ENCODE measurements at regions of chr6 and their contacts with region 1.

Region 1: DNA sequence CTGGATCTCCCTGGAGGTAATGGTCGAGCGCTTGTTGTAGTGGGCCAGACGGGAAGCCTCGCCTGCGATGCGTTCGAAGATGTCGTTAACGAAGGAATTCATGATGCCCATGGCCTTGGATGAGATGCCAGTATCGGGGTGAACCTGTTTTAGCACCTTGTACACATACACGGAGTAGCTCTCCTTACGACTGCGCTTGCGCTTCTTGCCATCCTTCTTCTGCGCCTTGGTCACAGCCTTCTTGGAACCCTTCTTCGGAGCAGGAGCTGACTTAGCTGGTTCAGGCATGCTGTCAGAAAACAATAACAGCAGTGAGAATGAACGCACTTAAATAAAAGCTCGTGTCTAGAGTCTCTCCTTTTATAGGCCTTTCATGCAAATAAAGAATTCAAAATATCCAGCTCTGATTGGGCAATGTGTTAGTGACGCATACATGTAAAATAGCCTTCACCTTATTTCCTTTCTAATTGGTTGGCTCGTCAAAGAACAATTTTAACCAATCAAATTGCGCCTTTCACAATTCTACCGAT is 129.2 kb downstream of the HFE start:
- DNase-seq: peak; percentile 92
- H3K4me3 Mint-ChIP-seq: no peak overlapping the region
- H3K27ac Mint-ChIP-seq: no peak overlapping the region
- H3K4me1 Mint-ChIP-seq: peaks cover 39% of the 10 kb centered on the region
- H3K27me3 Mint-ChIP-seq: no peaks in the 10 kb centered on the region

Region 2: DNA sequence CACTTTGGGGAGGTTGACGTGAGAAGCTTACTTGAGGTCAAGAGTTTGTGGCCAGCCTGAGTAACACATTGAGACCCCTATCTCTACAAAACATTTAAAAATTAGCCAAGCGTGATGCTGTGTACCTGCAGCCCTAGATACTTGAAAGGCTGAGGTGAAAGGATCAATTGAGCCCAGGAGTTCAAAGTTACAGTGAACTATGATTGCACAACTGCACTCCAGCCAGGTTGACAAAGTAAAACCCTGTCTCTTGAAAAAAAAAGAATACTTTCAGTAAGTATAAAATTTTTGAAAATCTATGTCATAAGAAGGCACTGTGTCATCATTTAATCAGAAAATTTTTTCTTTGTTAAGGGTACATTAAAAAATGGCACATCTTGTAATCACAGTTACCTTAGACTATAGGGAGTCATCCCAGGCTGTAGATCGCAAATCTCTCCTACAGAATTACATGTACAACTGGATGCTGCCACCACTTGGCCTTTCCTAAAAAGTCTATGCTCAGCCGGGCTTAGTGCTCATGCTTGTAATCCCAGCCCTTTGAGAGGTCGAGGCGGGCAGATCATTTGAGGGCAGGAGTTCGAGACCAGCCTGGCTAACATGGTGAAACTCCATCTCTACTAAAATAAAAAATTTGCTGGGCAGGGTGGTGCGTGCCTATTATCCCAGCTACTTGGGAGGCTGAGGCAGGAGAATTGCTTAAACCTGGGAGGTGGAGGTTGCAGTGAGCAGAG is 1830.7 kb before region 1 on chr6:
- CTCF ChIA-PET with region 1: no interaction called
- POLR2A ChIA-PET with region 1: no interaction called
- DNase-seq: no peak
- H3K4me3 Mint-ChIP-seq: no peak overlapping the region
- H3K27ac Mint-ChIP-seq: no peak overlapping the region
- H3K4me1 Mint-ChIP-seq: no peaks in the 10 kb centered on the region
- H3K27me3 Mint-ChIP-seq: peaks cover 3% of the 10 kb centered on the region

Region 3: GRCh38 chr6:26031595-26032339 is 184.7 kb before region 1 on chr6:
- CTCF ChIA-PET with region 1: interaction called, 6 read pairs
- POLR2A ChIA-PET with region 1: interaction called, 21 read pairs
- DNase-seq: peak; percentile 96
- H3K4me3 Mint-ChIP-seq: peak overlapping the region; percentile 96
- H3K27ac Mint-ChIP-seq: peak overlapping the region; percentile 100
- H3K4me1 Mint-ChIP-seq: peaks cover 79% of the 10 kb centered on the region
- H3K27me3 Mint-ChIP-seq: peaks cover 3% of the 10 kb centered on the region

Region 4: DNA sequence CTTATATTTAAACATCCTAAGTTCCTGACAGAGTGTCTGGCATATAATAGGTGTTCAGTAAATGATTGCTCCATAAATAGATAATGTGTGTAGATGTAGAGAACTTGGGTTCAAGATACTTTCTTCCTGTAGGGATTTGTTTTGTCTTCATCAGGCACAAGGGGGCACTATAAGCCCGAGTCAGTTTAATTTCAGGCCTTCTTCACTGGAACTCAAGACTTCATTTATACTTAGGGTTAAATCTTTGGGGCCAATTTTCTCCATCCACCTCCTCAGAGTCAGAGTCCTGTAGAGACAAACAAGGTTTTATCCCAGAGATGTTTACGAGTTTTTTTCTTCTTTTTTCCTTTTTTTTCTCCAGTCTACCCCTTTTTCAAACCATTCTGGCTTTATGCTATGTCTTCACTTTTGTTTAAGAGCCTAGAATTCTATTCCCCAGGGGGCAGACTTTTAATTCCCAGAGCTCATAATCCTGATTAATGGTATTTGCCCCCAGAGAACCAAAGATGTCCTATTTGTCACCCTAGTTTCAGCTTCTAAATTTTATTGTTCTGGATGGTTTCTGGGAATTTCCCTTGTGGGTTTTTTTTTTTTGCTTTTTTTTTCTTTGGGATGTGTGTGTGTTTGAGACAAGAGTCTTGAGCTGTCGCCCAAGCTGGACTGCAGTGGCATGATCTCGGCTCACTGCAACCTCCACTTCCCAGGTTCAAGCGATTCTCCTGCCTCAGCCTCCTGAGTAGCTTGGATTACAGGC is 40.8 kb before region 1 on chr6:
- CTCF ChIA-PET with region 1: interaction called, 4 read pairs
- POLR2A ChIA-PET with region 1: interaction called, 23 read pairs
- DNase-seq: peak; percentile 81
- H3K4me3 Mint-ChIP-seq: peak overlapping the region; percentile 54
- H3K27ac Mint-ChIP-seq: peak overlapping the region; percentile 75
- H3K4me1 Mint-ChIP-seq: peaks cover 50% of the 10 kb centered on the region
- H3K27me3 Mint-ChIP-seq: no peaks in the 10 kb centered on the region

Region 5: GRCh38 chr6:26204332-26205165 is 11.9 kb before region 1 on chr6:
- CTCF ChIA-PET with region 1: interaction called, 35 read pairs
- POLR2A ChIA-PET with region 1: interaction called, 205 read pairs
- DNase-seq: peak; percentile 95
- H3K4me3 Mint-ChIP-seq: no peak overlapping the region
- H3K27ac Mint-ChIP-seq: no peak overlapping the region
- H3K4me1 Mint-ChIP-seq: peaks cover 38% of the 10 kb centered on the region
- H3K27me3 Mint-ChIP-seq: peaks cover 2% of the 10 kb centered on the region

Region 6: GRCh38 chr6:26270903-26271667 is 54.7 kb after region 1 on chr6:
- CTCF ChIA-PET with region 1: interaction called, 4 read pairs
- POLR2A ChIA-PET with region 1: interaction called, 65 read pairs
- DNase-seq: peak; percentile 91
- H3K4me3 Mint-ChIP-seq: no peak overlapping the region
- H3K27ac Mint-ChIP-seq: no peak overlapping the region
- H3K4me1 Mint-ChIP-seq: peaks cover 32% of the 10 kb centered on the region
- H3K27me3 Mint-ChIP-seq: no peaks in the 10 kb centered on the region

Region 7: DNA sequence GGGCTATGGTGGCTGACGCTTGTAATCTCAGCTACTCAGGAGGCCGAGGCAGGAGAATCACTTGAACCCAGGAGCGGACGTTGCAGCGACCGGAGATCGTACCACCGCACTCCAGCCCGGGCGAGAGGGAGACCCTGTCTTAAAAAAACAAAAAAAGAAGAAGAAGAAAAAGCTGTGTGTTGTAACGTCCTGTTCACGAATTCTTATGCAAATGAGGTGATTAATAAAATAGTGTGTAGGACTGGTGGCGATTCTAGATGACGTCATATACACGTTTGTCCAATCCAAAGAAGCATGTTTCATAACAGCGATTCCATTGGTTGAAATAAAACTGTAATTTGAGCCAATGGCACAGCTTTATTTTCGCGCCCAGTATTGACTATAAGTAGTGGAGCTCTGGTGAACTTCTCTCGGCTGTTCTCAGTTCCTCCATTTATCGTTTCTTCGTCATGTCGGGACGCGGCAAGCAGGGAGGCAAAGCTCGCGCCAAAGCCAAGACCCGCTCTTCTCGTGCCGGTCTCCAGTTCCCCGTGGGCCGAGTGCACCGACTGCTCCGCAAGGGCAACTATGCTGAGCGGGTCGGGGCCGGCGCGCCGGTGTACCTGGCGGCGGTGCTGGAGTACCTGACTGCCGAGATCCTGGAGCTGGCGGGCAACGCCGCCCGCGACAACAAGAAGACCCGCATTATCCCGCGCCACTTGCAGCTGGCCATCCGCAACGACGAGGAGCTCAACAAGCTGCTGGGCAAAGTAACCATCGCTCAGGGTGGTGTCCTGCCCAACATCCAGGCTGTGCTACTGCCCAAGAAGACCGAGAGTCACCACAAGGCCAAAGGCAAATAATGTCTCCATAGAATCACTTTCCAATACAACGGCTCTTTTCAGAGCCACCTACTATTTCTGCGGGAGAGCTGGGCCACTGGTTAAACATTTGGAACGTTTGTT is 1648.8 kb after region 1 on chr6:
- CTCF ChIA-PET with region 1: no interaction called
- POLR2A ChIA-PET with region 1: interaction called, 14 read pairs
- DNase-seq: peak; percentile 88
- H3K4me3 Mint-ChIP-seq: peak overlapping the region; percentile 99
- H3K27ac Mint-ChIP-seq: peak overlapping the region; percentile 100
- H3K4me1 Mint-ChIP-seq: peaks cover 65% of the 10 kb centered on the region
- H3K27me3 Mint-ChIP-seq: no peaks in the 10 kb centered on the region

Measured in activated CD4-positive, alpha-beta T cell treated with anti-CD3 and anti-CD28 coated beads, Interleukin-2, amount 10 ng/mL, durations not matched to agents 7 days and 5 days (primary cell).